ENCODE measurements at regions of chr10 and their contacts with region 1.

Region 1: DNA sequence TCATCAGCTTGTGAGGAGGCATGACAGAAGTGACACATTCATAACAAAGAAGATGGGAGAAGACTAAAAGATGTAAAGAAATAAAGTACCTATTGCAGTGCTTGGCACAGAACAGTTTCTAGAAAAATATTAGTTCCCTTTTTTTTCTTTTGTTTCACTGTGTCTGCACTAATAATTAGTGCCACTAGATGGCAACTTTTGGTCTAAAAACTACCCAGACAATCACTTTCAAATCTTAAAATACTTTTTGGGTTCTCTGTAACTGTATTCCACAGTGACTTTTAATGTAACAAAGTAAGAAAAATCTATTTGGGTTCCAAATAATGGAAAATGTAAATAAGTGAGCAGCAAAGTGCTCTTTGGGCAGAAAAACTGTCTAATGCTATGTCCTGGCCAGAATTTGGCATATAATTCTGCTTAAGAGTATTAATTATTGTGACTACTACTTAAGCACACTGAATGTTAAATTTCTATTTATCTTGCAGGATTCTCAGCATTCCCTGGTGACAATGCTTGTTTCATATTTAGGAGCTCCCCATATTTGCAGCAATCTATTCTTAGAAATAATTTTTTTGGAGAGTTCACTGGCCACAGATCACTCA is 134.8 kb upstream of the KIF5B start:
- DNase-seq: no peak
- H3K4me3 ChIP-seq: no peak overlapping the region
- H3K27ac ChIP-seq: no peak overlapping the region
- H3K4me1 ChIP-seq: no peaks in the 10 kb centered on the region
- H3K27me3 ChIP-seq: no peaks in the 10 kb centered on the region
- CTCF ChIP-seq: peak; percentile 65 to 82 (median 72)
- POLR2A ChIP-seq: no peak

Region 2: GRCh38 chr10:32271617-32272016 is 80.6 kb after region 1 on chr10:
- intact Hi-C with region 1: no loop called
- DNase-seq: peak in 2 of 7 donors; percentile 43 to 44
- H3K4me3 ChIP-seq: no peak overlapping the region
- H3K27ac ChIP-seq: no peak overlapping the region
- H3K4me1 ChIP-seq: peaks cover 0 to 29% of the 10 kb centered on the region in 2 donors
- H3K27me3 ChIP-seq: no peaks in the 10 kb centered on the region
- CTCF ChIP-seq: no peak
- POLR2A ChIP-seq: no peak

Region 3: DNA sequence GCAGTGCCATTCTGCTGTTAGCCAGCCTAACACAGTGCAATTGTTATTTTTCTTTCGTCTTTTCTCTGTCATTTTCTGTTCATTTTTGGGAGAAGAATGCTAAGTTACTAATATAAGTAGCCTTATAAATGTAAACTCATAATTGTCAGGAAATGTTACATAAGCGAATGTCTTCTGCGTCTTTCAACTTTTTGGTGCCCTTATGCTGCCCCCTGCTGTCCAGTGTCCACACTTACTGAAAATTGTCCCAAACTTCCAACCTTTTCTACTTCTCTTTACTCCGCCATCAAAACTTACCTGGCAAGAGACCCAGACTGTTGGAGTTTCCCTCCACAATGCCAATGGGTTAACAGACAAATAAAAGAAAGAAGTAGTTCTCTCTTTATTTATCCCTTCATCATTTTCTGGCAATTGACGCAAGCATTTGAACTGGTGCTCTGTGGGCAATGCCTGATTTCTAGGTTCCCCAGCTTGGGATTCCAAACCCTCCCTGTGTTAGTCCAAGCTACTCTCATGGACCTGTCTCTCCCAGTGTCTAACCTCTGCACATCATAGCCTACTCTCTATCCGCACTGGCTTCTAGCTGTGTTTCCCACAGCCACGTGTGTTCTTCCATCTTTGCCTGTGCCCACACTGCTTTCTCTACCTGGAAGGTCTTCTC is 176.9 kb after region 1 on chr10:
- intact Hi-C with region 1: loop called in 1 of 2 experiments (anchors 10 kb)
- DNase-seq: peak; percentile 58 to 83 (median 74)
- H3K4me3 ChIP-seq: no peak overlapping the region
- H3K27ac ChIP-seq: peak overlapping the region in 1 of 5 donors; percentile 0
- H3K4me1 ChIP-seq: peaks cover 0 to 35% of the 10 kb centered on the region in 2 donors
- H3K27me3 ChIP-seq: no peaks in the 10 kb centered on the region
- CTCF ChIP-seq: peak; percentile 67 to 82 (median 79)
- POLR2A ChIP-seq: no peak